CD8-positive, alpha-beta memory T cell (primary cell): ENCODE measurements at regions of chr11 and their contacts with region 1.

Region 1: DNA sequence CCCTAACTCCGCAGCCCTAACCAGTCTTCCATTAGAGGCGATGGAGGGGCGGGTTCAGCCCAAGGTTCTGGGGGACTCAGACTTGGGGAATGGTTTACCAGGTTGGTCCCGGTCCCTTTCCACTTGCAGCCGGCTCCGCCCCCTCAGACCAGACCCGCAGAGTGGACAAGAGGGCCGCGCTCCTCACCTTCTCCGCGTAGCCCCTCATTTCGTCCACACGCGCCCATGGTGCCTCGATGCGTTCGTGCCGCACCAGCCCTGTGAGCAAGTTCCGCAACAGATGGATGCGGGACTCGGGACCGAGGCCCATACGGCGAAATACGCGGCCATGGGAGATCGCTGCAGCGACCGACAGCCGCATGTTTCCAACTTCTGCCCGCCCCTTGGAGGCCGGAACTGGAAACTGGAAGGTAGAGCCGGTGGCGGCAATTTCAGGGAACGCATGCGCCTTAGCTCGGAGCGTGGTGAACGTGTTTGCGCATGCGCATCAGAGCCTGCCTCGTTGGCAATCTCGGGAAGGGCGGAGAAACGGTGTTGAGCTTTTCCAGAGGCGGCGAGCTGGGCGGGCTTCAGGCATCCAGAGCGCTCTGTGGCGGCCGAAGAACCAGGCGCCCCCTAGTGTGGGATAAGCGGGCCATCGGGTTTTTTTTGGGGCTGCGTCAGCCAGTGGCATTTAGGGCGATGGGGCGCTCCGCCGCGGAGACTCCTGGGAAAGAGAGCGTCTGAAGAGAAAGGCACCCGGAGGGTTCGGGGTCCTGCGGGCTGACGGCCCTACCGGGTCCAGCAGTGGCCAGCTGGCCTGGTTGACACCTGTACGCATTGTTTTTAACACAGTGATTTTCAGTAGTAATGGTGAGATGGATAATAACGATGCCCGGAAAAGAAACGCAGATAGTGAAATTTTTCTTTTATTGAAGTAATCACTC is at the start of gene MRPL17:
- DNase-seq: peak; percentile 97 to 100 (median 99)
- H3K4me3 ChIP-seq: peak within 1 kb of the TSS; percentile 98
- H3K4me3 Mint-ChIP-seq: peak within 1 kb of the TSS; percentile 87 to 99 (median 98)
- H3K27ac ChIP-seq: peak within 1 kb of the TSS; percentile 90
- H3K27ac Mint-ChIP-seq: peak within 1 kb of the TSS; percentile 93 to 100 (median 99)
- H3K4me1 ChIP-seq: peaks cover 17% of the 10 kb centered on the region
- H3K4me1 Mint-ChIP-seq: peaks cover 26 to 45% (median 42%) of the 10 kb centered on the region in 3 donors
- H3K27me3 ChIP-seq: no peaks in the 10 kb centered on the region
- H3K27me3 Mint-ChIP-seq: peaks cover 0 to 2% of the 10 kb centered on the region in 2 donors
- total RNA-seq, gene MRPL17: 124 to 129 TPM

Region 2: GRCh38 chr11:6333112-6333511 is 350.1 kb before region 1 on chr11:
- CTCF ChIA-PET with region 1: no interaction called
- POLR2A ChIA-PET with region 1: no interaction called
- DNase-seq: no peak
- H3K4me3 ChIP-seq: no peak overlapping the region
- H3K4me3 Mint-ChIP-seq: no peak overlapping the region
- H3K27ac ChIP-seq: no peak overlapping the region
- H3K27ac Mint-ChIP-seq: no peak overlapping the region
- H3K4me1 ChIP-seq: no peaks in the 10 kb centered on the region
- H3K4me1 Mint-ChIP-seq: no peaks in the 10 kb centered on the region
- H3K27me3 ChIP-seq: no peaks in the 10 kb centered on the region
- H3K27me3 Mint-ChIP-seq: peaks cover 0 to 15% of the 10 kb centered on the region in 2 donors

Region 3: GRCh38 chr11:6531267-6531752 is 151.9 kb before region 1 on chr11:
- CTCF ChIA-PET with region 1: interaction called, 37 read pairs
- POLR2A ChIA-PET with region 1: interaction called, 7 read pairs
- DNase-seq: peak in 2 of 5 donors; percentile 21 to 33
- H3K4me3 ChIP-seq: no peak overlapping the region
- H3K4me3 Mint-ChIP-seq: no peak overlapping the region
- H3K27ac ChIP-seq: no peak overlapping the region
- H3K27ac Mint-ChIP-seq: no peak overlapping the region
- H3K4me1 ChIP-seq: peaks cover 4% of the 10 kb centered on the region
- H3K4me1 Mint-ChIP-seq: peaks cover 7 to 13% (median 12%) of the 10 kb centered on the region in 3 donors
- H3K27me3 ChIP-seq: no peaks in the 10 kb centered on the region
- H3K27me3 Mint-ChIP-seq: no peaks in the 10 kb centered on the region

Region 4: GRCh38 chr11:6566704-6567370 is 116.4 kb before region 1 on chr11:
- CTCF ChIA-PET with region 1: no interaction called
- POLR2A ChIA-PET with region 1: no interaction called
- DNase-seq: no peak
- H3K4me3 ChIP-seq: no peak overlapping the region
- H3K4me3 Mint-ChIP-seq: no peak overlapping the region
- H3K27ac ChIP-seq: no peak overlapping the region
- H3K27ac Mint-ChIP-seq: no peak overlapping the region
- H3K4me1 ChIP-seq: no peaks in the 10 kb centered on the region
- H3K4me1 Mint-ChIP-seq: no peaks in the 10 kb centered on the region
- H3K27me3 ChIP-seq: no peaks in the 10 kb centered on the region
- H3K27me3 Mint-ChIP-seq: peaks cover 0 to 4% of the 10 kb centered on the region in 2 donors

Region 5: GRCh38 chr11:6603287-6604080 is 79.7 kb before region 1 on chr11 and contains the starts of genes ILK and RRP8:
- CTCF ChIA-PET with region 1: interaction called, 68 read pairs
- POLR2A ChIA-PET with region 1: interaction called, 29 read pairs
- DNase-seq: peak; percentile 80 to 91 (median 81)
- H3K4me3 ChIP-seq: peak within 1 kb of the TSS; percentile 86
- H3K4me3 Mint-ChIP-seq: no peak within 1 kb of the TSS
- H3K27ac ChIP-seq: peak within 1 kb of the TSS; percentile 91
- H3K27ac Mint-ChIP-seq: no peak within 1 kb of the TSS
- H3K4me1 ChIP-seq: peaks cover 57% of the 10 kb centered on the region
- H3K4me1 Mint-ChIP-seq: peaks cover 14 to 31% (median 18%) of the 10 kb centered on the region in 3 donors
- H3K27me3 ChIP-seq: no peaks in the 10 kb centered on the region
- H3K27me3 Mint-ChIP-seq: no peaks in the 10 kb centered on the region
- total RNA-seq, gene ILK: 90.1 to 92.6 TPM
- total RNA-seq, gene RRP8: 42.0 to 44.7 TPM

Region 6: GRCh38 chr11:6619004-6619745 is 64.0 kb before region 1 on chr11 and contains the start of gene TPP1:
- CTCF ChIA-PET with region 1: interaction called, 54 read pairs
- POLR2A ChIA-PET with region 1: interaction called, 16 read pairs
- DNase-seq: peak; percentile 83 to 95 (median 91)
- H3K4me3 ChIP-seq: peak within 1 kb of the TSS; percentile 91
- H3K4me3 Mint-ChIP-seq: no peak within 1 kb of the TSS
- H3K27ac ChIP-seq: peak within 1 kb of the TSS; percentile 88
- H3K27ac Mint-ChIP-seq: no peak within 1 kb of the TSS
- H3K4me1 ChIP-seq: peaks cover 19% of the 10 kb centered on the region
- H3K4me1 Mint-ChIP-seq: peaks cover 9 to 13% (median 13%) of the 10 kb centered on the region in 3 donors
- H3K27me3 ChIP-seq: no peaks in the 10 kb centered on the region
- H3K27me3 Mint-ChIP-seq: peaks cover 0 to 1% of the 10 kb centered on the region in 2 donors
- total RNA-seq, gene TPP1: 57.2 to 61.6 TPM

Region 7: GRCh38 chr11:6667733-6668374 is 15.3 kb before region 1 on chr11:
- CTCF ChIA-PET with region 1: interaction called, 45 read pairs
- POLR2A ChIA-PET with region 1: interaction called, 5 read pairs
- DNase-seq: peak in 2 of 5 donors; percentile 41 to 47
- H3K4me3 ChIP-seq: no peak overlapping the region
- H3K4me3 Mint-ChIP-seq: peak overlapping the region in 1 of 7 donors; percentile 38
- H3K27ac ChIP-seq: no peak overlapping the region
- H3K27ac Mint-ChIP-seq: peak overlapping the region; percentile 6 to 86 (median 56)
- H3K4me1 ChIP-seq: peaks cover 45% of the 10 kb centered on the region
- H3K4me1 Mint-ChIP-seq: peaks cover 45 to 66% (median 65%) of the 10 kb centered on the region in 3 donors
- H3K27me3 ChIP-seq: no peaks in the 10 kb centered on the region
- H3K27me3 Mint-ChIP-seq: no peaks in the 10 kb centered on the region

Region 8: DNA sequence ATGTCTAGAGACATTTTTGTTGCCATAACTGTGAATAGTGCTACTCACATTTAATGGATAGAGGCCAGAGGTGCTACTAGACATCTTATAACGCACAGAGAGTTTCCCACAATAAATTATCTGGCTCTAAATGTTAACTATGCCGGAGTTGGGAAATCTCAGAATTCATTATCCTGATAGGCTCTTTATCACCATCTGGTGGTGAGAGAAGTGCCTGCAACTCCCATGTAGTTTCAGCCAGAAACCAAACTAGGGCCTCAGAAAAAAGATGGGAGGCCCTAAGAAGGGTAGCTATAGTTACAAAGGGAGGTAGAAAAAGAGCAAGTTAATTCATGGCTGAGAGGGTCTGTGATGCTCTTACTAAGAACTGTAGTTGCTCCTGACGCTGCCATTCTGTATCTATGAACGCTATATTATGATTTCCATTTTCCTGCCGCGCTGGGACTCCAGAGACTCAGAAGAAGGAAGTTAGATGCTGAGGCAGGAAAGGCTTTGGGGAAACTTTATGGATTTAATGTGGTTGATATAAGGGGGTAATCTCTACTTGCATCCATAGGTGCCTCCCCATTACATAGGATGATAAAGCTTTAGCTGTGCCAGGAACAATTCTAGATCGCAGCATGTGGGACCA is 22.8 kb after region 1 on chr11:
- CTCF ChIA-PET with region 1: interaction called, 18 read pairs
- POLR2A ChIA-PET with region 1: interaction called, 3 read pairs
- DNase-seq: peak in 3 of 5 donors; percentile 25 to 38 (median 29)
- H3K4me3 ChIP-seq: no peak overlapping the region
- H3K4me3 Mint-ChIP-seq: no peak overlapping the region
- H3K27ac ChIP-seq: no peak overlapping the region
- H3K27ac Mint-ChIP-seq: peak overlapping the region; percentile 42 to 81 (median 68)
- H3K4me1 ChIP-seq: no peaks in the 10 kb centered on the region
- H3K4me1 Mint-ChIP-seq: peaks cover 15 to 30% (median 26%) of the 10 kb centered on the region in 3 donors
- H3K27me3 ChIP-seq: no peaks in the 10 kb centered on the region
- H3K27me3 Mint-ChIP-seq: no peaks in the 10 kb centered on the region